PC-9 (cell line): ENCODE measurements at regions of chr18 and their contacts with region 1.

Region 1: GRCh38 chr18:51029694-51030536 is at the start of gene SMAD4:
- DNase-seq: peak; percentile 82 to 92
- H3K4me3 ChIP-seq: peak within 1 kb of the TSS; percentile 80
- H3K27ac ChIP-seq: peak within 1 kb of the TSS; percentile 67
- H3K4me1 ChIP-seq: peaks cover 33% of the 10 kb centered on the region
- H3K27me3 ChIP-seq: no peaks in the 10 kb centered on the region
- CTCF ChIP-seq: no peak
- total RNA-seq, gene SMAD4: 51.2 and 60.7 TPM in 2 replicates

Region 2: GRCh38 chr18:50356036-50356945 is 673.6 kb before region 1 on chr18:
- CTCF ChIA-PET with region 1: no interaction called
- POLR2A ChIA-PET with region 1: no interaction called
- intact Hi-C with region 1: no loop called
- DNase-seq: no peak
- H3K4me3 ChIP-seq: no peak overlapping the region
- H3K27ac ChIP-seq: no peak overlapping the region
- H3K4me1 ChIP-seq: peaks cover 10% of the 10 kb centered on the region
- H3K27me3 ChIP-seq: no peaks in the 10 kb centered on the region
- CTCF ChIP-seq: no peak

Region 3: DNA sequence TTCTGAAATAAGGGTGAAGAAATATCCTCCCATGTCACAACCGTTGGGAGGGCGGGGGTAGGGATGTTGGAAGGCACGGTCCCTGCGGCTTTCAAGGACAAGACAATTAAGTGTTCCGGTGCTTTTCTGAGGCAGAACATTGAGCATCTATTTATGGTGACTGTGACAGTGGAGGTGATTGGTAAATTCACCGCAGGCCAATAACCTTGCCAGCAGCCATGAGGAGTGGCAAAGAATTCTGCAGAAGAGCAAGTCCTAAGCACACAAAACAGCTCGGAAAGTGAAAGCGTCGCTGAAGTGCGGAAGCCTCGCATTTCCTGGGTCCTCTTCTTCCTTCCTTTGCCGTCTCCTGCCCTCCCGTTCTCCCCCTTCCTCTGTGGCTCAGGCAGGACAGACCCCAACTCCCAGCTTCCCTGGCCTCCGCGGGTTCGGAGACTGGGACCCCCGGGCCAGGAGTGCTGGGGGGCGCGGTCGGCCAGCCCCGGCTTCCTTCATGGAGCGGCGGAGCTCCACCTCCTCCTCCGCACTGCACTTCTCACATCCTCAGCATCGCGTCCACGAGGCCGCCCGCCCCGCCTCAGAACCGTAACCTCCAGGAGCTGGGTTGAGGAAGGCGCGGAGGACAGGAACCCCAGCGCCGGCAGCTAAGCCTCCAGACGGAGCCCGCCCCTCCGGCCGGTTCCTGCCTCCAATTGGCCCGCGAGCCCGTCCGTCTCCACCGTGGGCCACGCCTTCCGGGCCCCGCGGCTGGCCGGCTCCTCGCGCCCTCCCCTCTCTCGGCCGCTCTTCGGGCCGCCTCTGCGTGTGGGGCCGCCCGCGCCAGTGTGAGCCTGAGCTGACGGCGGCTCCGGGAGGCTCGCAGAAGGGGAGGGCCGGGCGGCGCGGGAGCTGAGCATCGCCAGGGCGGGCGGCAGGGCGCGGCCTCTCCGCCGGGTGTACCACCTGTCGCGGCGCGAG is 151.3 kb before region 1 on chr18 and contains the start of gene ME2:
- CTCF ChIA-PET with region 1: no interaction called
- POLR2A ChIA-PET with region 1: interaction called, 6 read pairs
- intact Hi-C with region 1: loop called (anchors 5 kb)
- DNase-seq: peak; percentile 82 to 91
- H3K4me3 ChIP-seq: peak within 1 kb of the TSS; percentile 73
- H3K27ac ChIP-seq: peak within 1 kb of the TSS; percentile 61
- H3K4me1 ChIP-seq: peaks cover 31% of the 10 kb centered on the region
- H3K27me3 ChIP-seq: no peaks in the 10 kb centered on the region
- CTCF ChIP-seq: no peak
- total RNA-seq, gene ME2: 24.6 and 27.9 TPM in 2 replicates

Region 4: DNA sequence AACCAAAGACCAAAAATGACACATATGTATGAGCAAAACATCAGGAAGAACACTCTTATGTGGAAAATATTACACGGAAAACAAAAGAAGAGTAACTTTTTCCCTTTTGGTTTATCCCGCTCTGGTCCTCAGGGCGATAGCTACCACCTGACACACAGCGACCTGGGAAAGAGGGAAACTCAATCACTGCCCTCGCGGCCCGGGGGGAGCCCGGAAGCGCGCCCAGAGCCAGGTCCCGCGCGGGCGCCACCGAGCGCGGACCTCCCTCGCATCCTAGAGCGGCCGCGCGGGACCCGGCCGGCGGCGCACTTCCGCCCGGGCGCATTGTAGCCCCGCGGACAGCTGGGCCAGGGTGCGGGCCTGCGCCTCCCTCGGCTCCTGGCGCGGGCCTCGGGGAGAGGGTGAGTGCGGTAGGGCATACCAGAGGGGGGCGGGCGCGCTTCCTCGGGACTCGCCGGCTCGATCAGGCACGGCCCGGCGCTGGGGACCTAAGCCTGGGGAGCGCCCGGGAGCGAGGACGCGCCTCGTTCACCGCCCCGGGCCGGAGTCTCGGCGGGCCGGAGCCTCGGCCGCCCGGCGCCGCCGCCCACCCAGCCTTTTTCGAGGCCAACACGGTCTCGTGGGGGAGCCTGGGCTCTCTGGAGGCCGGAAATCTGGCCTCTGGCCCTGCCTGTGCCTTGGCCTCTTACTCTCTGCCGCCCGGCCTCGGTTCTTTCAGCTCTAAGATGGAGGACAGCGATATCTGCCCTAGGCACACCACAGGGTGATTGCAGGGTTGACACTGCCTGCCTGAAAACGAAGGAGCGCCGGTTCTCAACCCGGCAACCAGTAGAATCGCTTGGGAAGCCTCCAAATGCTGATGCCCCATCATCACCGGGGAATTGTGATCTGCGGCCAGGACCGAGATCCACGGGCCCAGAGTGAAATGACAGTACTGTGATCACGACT is 61.9 kb before region 1 on chr18 and contains the start of gene ELAC1:
- CTCF ChIA-PET with region 1: interaction called, 11 read pairs
- POLR2A ChIA-PET with region 1: interaction called, 13 read pairs
- intact Hi-C with region 1: loop called (anchors 1 kb)
- DNase-seq: peak; percentile 57 to 61
- H3K4me3 ChIP-seq: peak within 1 kb of the TSS; percentile 94
- H3K27ac ChIP-seq: peak within 1 kb of the TSS; percentile 62
- H3K4me1 ChIP-seq: peaks cover 22% of the 10 kb centered on the region
- H3K27me3 ChIP-seq: no peaks in the 10 kb centered on the region
- CTCF ChIP-seq: no peak
- total RNA-seq, gene ELAC1: 5.2 and 6.0 TPM in 2 replicates

Region 5: GRCh38 chr18:51016903-51017879 is 12.7 kb before region 1 on chr18:
- CTCF ChIA-PET with region 1: interaction called, 10 read pairs
- POLR2A ChIA-PET with region 1: no interaction called
- intact Hi-C with region 1: no loop called
- DNase-seq: no peak
- H3K4me3 ChIP-seq: no peak overlapping the region
- H3K27ac ChIP-seq: no peak overlapping the region
- H3K4me1 ChIP-seq: no peaks in the 10 kb centered on the region
- H3K27me3 ChIP-seq: no peaks in the 10 kb centered on the region
- CTCF ChIP-seq: no peak